Testis (tissue), 5 donors: ENCODE measurements at regions of chr14 and their contacts with region 1.

Region 1: GRCh38 chr14:49971156-49972130 is 78.6 kb downstream of the ARF6 start:
- DNase-seq: no peak
- H3K4me3 ChIP-seq: no peak overlapping the region
- H3K27ac ChIP-seq: peak overlapping the region; percentile 81 to 86
- H3K4me1 ChIP-seq: peaks cover 65% of the 10 kb centered on the region
- H3K27me3 ChIP-seq: no peaks in the 10 kb centered on the region
- CTCF ChIP-seq: no peak
- POLR2A ChIP-seq: no peak

Region 2: GRCh38 chr14:49892636-49893308 is 78.7 kb before region 1 on chr14 and contains the start of gene ARF6:
- intact Hi-C with region 1: loop called (anchors 10 kb)
- DNase-seq: peak; percentile 98
- H3K4me3 ChIP-seq: peak within 1 kb of the TSS; percentile 96
- H3K27ac ChIP-seq: peak within 1 kb of the TSS; percentile 98 to 99
- H3K4me1 ChIP-seq: peaks cover 26% of the 10 kb centered on the region
- H3K27me3 ChIP-seq: no peaks in the 10 kb centered on the region
- CTCF ChIP-seq: no peak
- POLR2A ChIP-seq: peak; percentile 87
- total RNA-seq, gene ARF6: 45.2 to 51.8 TPM

Region 3: DNA sequence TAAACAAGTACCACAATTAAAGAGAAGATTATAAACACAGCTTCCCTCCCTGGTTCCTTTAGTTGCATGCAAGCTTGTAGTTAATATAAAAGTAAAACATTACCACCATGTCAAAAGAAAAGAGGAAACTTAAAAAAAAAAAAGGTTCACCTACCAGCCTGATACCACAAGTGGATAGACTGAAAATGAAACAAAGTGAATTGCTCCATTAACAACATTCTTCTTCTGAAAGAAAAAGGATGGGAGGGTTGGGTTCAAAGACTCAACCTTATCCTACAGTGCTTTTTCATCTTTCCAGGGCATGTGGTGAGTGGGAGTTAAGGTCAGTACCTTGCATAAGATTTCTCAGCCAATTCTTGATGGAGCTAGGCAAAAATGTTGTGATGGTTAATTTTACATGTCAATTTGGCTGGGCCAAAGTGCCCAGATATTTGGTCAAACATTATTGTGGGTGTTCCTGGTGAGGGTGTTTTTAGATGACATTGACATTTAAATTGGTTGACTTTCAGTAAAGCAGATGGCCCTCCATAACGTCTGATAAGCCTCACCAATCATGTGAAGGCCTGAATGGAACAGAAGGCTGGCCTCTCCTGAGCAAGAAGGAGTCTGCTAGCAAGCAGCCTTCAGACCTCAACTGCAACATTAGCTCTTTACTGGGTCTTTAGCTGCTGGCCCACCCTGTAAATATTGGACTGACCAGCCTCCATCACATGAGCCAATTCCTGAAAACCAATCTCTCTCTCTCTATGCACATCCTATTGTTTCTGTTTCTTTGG is 116.1 kb after region 1 on chr14:
- intact Hi-C with region 1: no loop called
- DNase-seq: no peak
- H3K4me3 ChIP-seq: no peak overlapping the region
- H3K27ac ChIP-seq: no peak overlapping the region
- H3K4me1 ChIP-seq: no peaks in the 10 kb centered on the region
- H3K27me3 ChIP-seq: no peaks in the 10 kb centered on the region
- CTCF ChIP-seq: no peak
- POLR2A ChIP-seq: no peak

Region 4: DNA sequence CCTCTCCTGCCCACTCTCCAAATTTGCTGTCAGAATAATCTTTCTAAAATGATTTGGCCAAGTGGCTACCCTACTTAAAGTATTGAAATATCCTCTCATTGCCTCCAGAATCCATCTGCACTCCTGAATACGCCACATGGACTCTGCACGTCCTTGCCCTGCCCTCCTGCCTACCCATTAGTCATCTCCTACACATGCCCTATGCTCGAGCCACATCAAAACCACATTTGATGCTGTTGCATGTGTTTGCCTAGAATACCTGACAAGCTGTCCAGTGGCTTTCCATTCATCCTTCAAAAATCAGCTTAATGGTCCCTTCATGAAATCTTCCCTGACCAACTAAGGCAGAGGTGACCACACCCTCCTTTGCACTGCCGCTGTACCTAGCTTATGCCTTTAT is 127.9 kb after region 1 on chr14:
- intact Hi-C with region 1: no loop called
- DNase-seq: no peak
- H3K4me3 ChIP-seq: no peak overlapping the region
- H3K27ac ChIP-seq: no peak overlapping the region
- H3K4me1 ChIP-seq: no peaks in the 10 kb centered on the region
- H3K27me3 ChIP-seq: no peaks in the 10 kb centered on the region
- CTCF ChIP-seq: no peak
- POLR2A ChIP-seq: no peak